ACHN (cell line): ENCODE measurements at regions of chr4 and their contacts with region 1.

Region 1: DNA sequence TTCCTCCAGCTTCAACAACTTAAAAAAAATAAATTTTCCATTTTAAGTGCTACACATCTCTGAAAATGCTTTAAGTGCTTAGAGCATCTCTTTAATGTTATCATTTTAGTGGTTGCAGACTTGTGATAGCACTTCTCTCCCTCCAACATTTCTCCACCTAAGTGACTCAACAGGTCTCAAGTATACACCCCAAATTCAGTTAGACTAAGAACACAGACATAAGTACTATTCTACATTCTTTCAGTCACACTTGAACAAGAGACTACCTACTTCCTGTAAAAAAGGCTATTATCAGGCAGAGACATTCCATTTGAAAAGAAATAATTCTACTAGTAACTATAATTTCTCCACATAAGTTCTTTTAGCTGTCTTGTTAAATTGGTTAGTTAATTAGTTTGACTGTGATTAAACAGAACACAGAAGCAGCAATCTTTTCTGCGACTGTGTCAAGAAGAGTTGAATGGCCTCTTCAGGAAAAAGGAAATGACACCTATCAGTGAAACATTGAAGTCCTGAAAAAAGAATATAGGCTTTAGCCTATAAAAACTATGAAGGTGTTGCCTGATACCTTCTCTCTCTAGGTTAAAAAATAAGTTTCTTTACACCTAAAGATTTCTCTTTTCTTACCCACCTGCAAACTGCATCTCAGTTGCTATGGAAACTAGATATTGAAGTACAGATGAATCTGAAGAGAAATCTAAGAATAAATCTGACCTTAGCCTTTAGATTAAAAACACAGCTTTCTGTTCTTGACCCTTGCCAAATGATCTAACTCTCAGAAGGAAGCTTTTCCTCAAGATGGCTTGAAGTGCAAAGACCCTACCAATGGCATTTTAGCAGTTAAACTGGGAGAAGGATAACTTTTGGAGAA is 18.0 kb downstream of the NAF1 start:
- DNase-seq: no peak

Region 2: GRCh38 chr4:162985131-162985530 is 163.6 kb before region 1 on chr4:
- in situ Hi-C with region 1: no loop called
- DNase-seq: no peak

Region 3: GRCh38 chr4:163263606-163264005 is 114.9 kb after region 1 on chr4:
- in situ Hi-C with region 1: no loop called
- DNase-seq: no peak

Region 4: GRCh38 chr4:163332500-163333406 is 184.1 kb after region 1 on chr4 and contains the start of gene NPY1R:
- in situ Hi-C with region 1: loop called (anchors 25 kb)
- DNase-seq: peak; percentile 84

Region 5: GRCh38 chr4:163544407-163545038 is 395.8 kb after region 1 on chr4:
- in situ Hi-C with region 1: loop called (anchors 25 kb)
- DNase-seq: peak; percentile 57